CD4-positive, alpha-beta memory T cell (primary cell): ENCODE measurements at regions of chr22 and their contacts with region 1.

Region 1: DNA sequence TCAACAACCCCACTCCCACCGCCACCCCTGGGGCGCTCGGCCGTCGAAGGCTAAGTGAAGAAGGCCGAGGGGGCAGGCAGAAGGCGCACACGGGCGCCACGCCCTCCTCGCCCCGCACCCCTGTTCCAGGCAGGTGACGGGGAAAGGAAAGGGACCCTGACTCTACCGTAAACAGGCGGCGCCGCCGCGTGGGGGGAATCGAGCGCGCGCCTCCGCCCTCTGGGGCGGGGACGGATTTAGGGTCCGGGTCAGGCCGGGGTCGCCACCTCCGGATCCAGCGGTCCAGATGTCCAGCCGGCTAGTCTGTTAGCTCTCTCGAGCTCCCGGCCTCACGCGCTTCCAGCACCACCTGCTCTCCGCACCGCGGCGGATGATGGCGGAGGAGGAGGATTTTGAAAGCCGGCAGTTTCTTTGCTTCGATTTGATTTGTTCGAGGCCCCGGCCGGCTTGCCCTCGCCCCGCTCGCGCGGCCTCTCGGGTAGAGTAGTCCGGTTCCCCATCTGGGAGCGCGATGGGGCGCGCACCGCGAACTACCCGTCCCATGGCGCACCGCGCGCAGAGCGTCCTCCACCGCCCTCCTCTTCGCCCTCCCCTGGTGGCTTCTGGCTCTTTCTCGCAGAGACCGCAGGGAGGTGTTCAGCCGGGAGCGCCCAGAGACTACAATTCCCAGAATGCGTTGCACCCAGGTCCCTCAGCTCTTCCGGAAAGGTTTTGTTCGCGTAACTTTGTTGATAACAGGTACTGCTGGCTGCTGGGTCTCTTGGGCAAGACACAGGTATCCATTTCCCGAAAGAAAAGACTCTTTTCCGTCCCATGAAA is at the start of gene RANGAP1:
- DNase-seq: peak; percentile 98 to 99 (median 99)
- H3K4me3 ChIP-seq: peak within 1 kb of the TSS; percentile 82 to 94
- H3K4me3 Mint-ChIP-seq: peak within 1 kb of the TSS; percentile 92 to 98 (median 96)
- H3K27ac ChIP-seq: peak within 1 kb of the TSS; percentile 99
- H3K27ac Mint-ChIP-seq: peak within 1 kb of the TSS; percentile 96 to 99 (median 99)
- H3K4me1 ChIP-seq: peaks cover 23% of the 10 kb centered on the region
- H3K4me1 Mint-ChIP-seq: peaks cover 16 to 50% (median 36%) of the 10 kb centered on the region in 4 donors
- H3K27me3 ChIP-seq: no peaks in the 10 kb centered on the region
- H3K27me3 Mint-ChIP-seq: no peaks in the 10 kb centered on the region
- total RNA-seq, gene RANGAP1: 69.1 to 74.7 TPM

Region 2: DNA sequence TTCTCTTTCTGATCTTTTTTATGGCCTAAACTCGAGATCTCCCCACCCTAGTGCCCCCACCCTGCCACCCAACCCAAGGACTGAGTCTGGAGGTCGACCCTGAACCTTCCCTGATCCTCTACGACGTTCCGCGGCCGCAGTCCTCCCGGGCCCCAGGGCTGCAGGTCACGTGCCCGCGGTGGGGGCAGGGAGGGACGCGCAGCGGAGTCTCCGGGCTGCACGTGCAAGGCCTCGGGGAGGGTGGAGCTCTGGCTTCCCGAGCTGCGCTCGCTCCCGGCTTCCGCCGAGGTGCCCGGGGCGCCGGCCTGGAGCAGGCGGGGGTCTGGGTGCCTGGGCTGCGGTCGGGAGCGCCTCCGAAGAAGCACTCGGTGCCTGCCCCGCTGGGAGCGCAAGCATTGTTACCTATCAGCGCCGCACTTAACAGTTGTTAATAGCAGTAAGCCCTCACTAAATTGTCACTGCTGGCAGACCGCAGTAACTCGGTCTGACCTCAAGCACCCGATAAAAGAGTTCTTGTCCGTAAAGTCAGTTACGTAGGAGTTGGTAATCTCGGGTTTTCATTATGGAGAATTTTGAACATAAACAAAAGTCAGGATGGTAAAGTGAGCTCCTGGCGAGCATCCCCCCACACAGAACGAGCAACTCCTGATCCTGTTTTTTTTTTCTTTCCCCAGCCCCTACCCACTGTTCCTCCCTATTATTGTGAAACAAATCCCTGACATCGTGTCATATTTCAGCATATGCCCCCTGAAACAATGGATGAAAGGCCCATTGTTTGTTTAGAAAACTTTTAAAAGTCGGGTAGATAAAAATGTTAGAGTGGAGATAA is 263.3 kb before region 1 on chr22:
- CTCF ChIA-PET with region 1: no interaction called
- POLR2A ChIA-PET with region 1: interaction called, 4 read pairs
- intact Hi-C with region 1: loop called (anchors 5 kb)
- DNase-seq: peak; percentile 72 to 82 (median 78)
- H3K4me3 ChIP-seq: peak overlapping the region in 1 of 2 donors; percentile 59
- H3K4me3 Mint-ChIP-seq: peak overlapping the region; percentile 70 to 88 (median 78)
- H3K27ac ChIP-seq: peak overlapping the region; percentile 70
- H3K27ac Mint-ChIP-seq: peak overlapping the region; percentile 38 to 92 (median 89)
- H3K4me1 ChIP-seq: peaks cover 18% of the 10 kb centered on the region
- H3K4me1 Mint-ChIP-seq: peaks cover 8 to 32% (median 15%) of the 10 kb centered on the region in 4 donors
- H3K27me3 ChIP-seq: no peaks in the 10 kb centered on the region
- H3K27me3 Mint-ChIP-seq: no peaks in the 10 kb centered on the region

Region 3: GRCh38 chr22:41197038-41197972 is 88.7 kb before region 1 on chr22:
- CTCF ChIA-PET with region 1: no interaction called
- POLR2A ChIA-PET with region 1: interaction called, 3 read pairs
- intact Hi-C with region 1: loop called (anchors 1 kb)
- DNase-seq: peak; percentile 70 to 83 (median 74)
- H3K4me3 ChIP-seq: peak overlapping the region; percentile 91 to 93
- H3K4me3 Mint-ChIP-seq: peak overlapping the region; percentile 90 to 96 (median 92)
- H3K27ac ChIP-seq: peak overlapping the region; percentile 50
- H3K27ac Mint-ChIP-seq: peak overlapping the region; percentile 17 to 92 (median 71)
- H3K4me1 ChIP-seq: peaks cover 11% of the 10 kb centered on the region
- H3K4me1 Mint-ChIP-seq: peaks cover 6 to 17% (median 13%) of the 10 kb centered on the region in 4 donors
- H3K27me3 ChIP-seq: no peaks in the 10 kb centered on the region
- H3K27me3 Mint-ChIP-seq: no peaks in the 10 kb centered on the region

Region 4: GRCh38 chr22:41217553-41218157 is 68.4 kb before region 1 on chr22:
- CTCF ChIA-PET with region 1: no interaction called
- POLR2A ChIA-PET with region 1: no interaction called
- intact Hi-C with region 1: no loop called
- DNase-seq: peak in 4 of 5 donors; percentile 17 to 55 (median 30)
- H3K4me3 ChIP-seq: peak overlapping the region in 1 of 2 donors; percentile 24
- H3K4me3 Mint-ChIP-seq: peak overlapping the region in 7 of 8 donors; percentile 30 to 71 (median 53)
- H3K27ac ChIP-seq: no peak overlapping the region
- H3K27ac Mint-ChIP-seq: peak overlapping the region; percentile 59 to 91 (median 78)
- H3K4me1 ChIP-seq: peaks cover 14% of the 10 kb centered on the region
- H3K4me1 Mint-ChIP-seq: peaks cover 8 to 32% (median 22%) of the 10 kb centered on the region in 4 donors
- H3K27me3 ChIP-seq: no peaks in the 10 kb centered on the region
- H3K27me3 Mint-ChIP-seq: no peaks in the 10 kb centered on the region

Region 5: GRCh38 chr22:41237707-41238569 is 48.1 kb before region 1 on chr22:
- CTCF ChIA-PET with region 1: interaction called, 5 read pairs
- POLR2A ChIA-PET with region 1: interaction called, 14 read pairs
- intact Hi-C with region 1: no loop called
- DNase-seq: peak; percentile 81 to 84 (median 82)
- H3K4me3 ChIP-seq: peak overlapping the region in 1 of 2 donors; percentile 12
- H3K4me3 Mint-ChIP-seq: peak overlapping the region in 6 of 8 donors; percentile 15 to 82 (median 67)
- H3K27ac ChIP-seq: no peak overlapping the region
- H3K27ac Mint-ChIP-seq: peak overlapping the region in 1 of 7 donors; percentile 70
- H3K4me1 ChIP-seq: peaks cover 13% of the 10 kb centered on the region
- H3K4me1 Mint-ChIP-seq: peaks cover 4 to 14% (median 6%) of the 10 kb centered on the region in 4 donors
- H3K27me3 ChIP-seq: no peaks in the 10 kb centered on the region
- H3K27me3 Mint-ChIP-seq: no peaks in the 10 kb centered on the region

Region 6: DNA sequence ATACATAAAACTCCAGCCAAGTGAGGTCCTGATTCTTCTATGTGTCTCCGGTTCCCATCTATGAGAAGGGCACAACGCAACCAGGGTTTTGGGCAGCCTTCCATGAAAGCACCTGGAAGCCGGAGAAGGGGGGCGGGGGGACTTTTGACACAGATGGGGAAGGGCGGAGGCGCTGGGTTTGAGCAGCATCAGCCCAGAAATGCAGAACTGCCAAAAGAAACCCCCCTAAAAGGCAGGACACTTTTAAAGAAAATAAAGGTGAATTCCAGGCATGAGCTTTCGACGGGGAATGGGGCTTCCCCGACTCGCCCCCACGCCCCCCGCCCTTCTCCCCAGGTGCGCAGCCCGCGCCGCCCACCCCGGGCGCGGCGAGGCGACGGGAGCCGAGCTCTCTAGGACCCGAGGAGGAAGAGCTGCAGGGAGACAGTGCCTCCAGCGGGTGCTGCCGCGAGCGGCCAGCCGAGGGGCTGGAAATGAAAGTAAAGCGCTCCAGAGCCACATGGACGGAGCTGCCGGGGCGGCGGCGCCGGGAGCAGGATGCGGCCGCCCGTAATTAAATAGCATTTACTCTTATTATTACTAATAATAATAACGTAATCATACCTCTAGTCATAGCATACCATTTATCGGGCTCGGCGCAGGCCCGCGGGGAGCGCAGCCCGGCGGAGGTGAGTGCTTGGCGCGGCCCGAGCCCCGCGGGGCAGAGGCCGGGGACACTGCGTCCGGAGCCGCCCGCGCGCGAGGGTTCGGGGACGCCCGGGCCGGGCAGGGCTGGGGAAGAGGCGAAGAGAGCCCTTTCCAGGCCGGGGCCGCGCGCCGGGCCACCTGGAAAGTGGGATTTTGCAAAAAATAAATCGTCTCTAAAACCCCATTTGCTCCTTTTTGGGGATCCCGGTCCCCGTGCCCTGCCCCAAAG is 15.3 kb after region 1 on chr22 and contains the start of gene ZC3H7B:
- CTCF ChIA-PET with region 1: interaction called, 11 read pairs
- POLR2A ChIA-PET with region 1: interaction called, 111 read pairs
- intact Hi-C with region 1: loop called (anchors 1 kb)
- DNase-seq: peak; percentile 84 to 92 (median 85)
- H3K4me3 ChIP-seq: peak within 1 kb of the TSS; percentile 54 to 76
- H3K4me3 Mint-ChIP-seq: peak within 1 kb of the TSS; percentile 86 to 89 (median 88)
- H3K27ac ChIP-seq: peak within 1 kb of the TSS; percentile 88
- H3K27ac Mint-ChIP-seq: peak within 1 kb of the TSS; percentile 83 to 97 (median 96)
- H3K4me1 ChIP-seq: peaks cover 24% of the 10 kb centered on the region
- H3K4me1 Mint-ChIP-seq: peaks cover 19 to 38% (median 30%) of the 10 kb centered on the region in 4 donors
- H3K27me3 ChIP-seq: no peaks in the 10 kb centered on the region
- H3K27me3 Mint-ChIP-seq: no peaks in the 10 kb centered on the region
- total RNA-seq, gene ZC3H7B: 39.4 to 40.3 TPM

Region 7: DNA sequence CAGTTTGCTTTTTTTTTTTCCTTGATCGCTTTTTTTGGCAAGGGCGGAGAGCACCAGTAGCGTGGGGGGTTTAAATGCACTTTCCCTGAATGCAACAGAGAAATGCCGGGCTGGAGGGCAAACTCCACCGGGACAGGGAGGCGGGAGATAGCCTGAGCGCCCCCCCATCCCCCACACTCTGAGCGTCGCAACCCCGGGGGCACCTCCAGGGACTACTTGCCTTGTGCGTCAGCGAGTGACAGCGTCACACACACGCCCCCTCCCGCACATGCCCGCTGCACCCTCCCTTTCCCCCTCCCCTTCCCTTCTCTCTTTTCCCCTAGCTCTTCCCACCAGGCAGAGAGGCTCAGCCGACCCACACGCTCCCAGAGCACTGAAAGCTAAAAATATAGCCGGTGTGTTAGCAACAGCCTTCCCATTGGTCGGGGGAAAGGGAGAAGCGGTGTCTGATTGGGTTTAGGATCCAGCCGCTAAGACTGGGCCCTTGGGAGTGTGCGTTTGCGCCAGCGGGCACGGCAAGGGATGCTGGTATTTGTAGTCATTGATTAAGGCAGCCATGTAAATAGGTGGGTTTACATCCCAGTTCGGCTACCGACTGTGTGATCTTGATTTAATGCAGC is 162.3 kb after region 1 on chr22:
- CTCF ChIA-PET with region 1: no interaction called
- POLR2A ChIA-PET with region 1: interaction called, 8 read pairs
- intact Hi-C with region 1: loop called (anchors 1 kb)
- DNase-seq: peak; percentile 91 to 97 (median 93)
- H3K4me3 ChIP-seq: peak overlapping the region; percentile 71 to 94
- H3K4me3 Mint-ChIP-seq: peak overlapping the region; percentile 90 to 98 (median 96)
- H3K27ac ChIP-seq: peak overlapping the region; percentile 87
- H3K27ac Mint-ChIP-seq: peak overlapping the region; percentile 94 to 99 (median 98)
- H3K4me1 ChIP-seq: peaks cover 11% of the 10 kb centered on the region
- H3K4me1 Mint-ChIP-seq: peaks cover 12 to 46% (median 19%) of the 10 kb centered on the region in 4 donors
- H3K27me3 ChIP-seq: no peaks in the 10 kb centered on the region
- H3K27me3 Mint-ChIP-seq: peaks cover 0 to 2% of the 10 kb centered on the region in 2 donors

Region 8: DNA sequence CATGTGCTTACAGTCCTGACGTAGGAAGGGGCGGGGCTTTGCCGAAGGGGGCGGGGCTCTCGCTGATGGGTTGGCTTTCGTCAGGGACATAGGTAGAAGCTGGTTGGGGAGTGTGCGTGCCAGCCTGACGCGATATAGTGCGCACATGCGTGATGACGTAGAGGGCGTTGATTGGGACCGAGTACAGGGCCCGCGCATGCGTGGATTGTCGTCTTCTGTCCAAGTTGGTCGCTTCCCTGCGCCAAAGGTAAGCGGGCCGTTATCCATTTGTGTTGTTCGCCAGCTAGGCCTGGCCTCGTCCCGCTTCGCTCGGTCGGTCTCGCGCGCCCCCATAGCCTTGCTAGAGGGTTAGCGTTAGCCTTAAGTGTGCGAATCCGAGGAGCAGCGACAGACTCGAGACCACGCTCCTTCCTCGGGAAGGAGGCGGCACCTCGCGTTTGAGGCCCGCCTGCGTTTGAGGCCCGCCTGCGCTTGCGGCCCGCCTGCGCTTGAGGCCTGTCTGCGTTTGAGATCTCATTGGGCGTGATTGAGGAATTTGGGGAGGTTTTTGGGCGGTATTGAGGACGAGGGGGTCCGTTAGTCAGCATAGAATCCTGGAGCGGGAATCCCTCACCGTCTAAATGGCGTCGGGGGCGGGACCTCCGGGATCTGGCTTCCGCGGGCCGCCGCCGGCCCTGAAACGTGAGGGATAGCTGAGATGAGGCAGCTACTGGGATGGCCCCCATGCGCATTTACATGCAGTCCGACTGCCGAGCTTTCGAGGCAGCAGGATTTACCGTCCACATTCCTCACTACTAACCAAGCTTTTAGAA is 335.3 kb after region 1 on chr22 and contains the start of gene XRCC6:
- CTCF ChIA-PET with region 1: no interaction called
- POLR2A ChIA-PET with region 1: interaction called, 12 read pairs
- intact Hi-C with region 1: loop called (anchors 1 kb)
- DNase-seq: peak; percentile 99 to 100 (median 99)
- H3K4me3 ChIP-seq: peak within 1 kb of the TSS; percentile 76 to 90
- H3K4me3 Mint-ChIP-seq: peak within 1 kb of the TSS; percentile 93 to 100 (median 98)
- H3K27ac ChIP-seq: peak within 1 kb of the TSS; percentile 100
- H3K27ac Mint-ChIP-seq: peak within 1 kb of the TSS; percentile 98 to 100 (median 99)
- H3K4me1 ChIP-seq: peaks cover 45% of the 10 kb centered on the region
- H3K4me1 Mint-ChIP-seq: peaks cover 23 to 52% (median 34%) of the 10 kb centered on the region in 4 donors
- H3K27me3 ChIP-seq: no peaks in the 10 kb centered on the region
- H3K27me3 Mint-ChIP-seq: no peaks in the 10 kb centered on the region
- total RNA-seq, gene XRCC6: 174 to 181 TPM